ENCODE measurements at regions of chr1 and their contacts with region 1.

Region 1: DNA sequence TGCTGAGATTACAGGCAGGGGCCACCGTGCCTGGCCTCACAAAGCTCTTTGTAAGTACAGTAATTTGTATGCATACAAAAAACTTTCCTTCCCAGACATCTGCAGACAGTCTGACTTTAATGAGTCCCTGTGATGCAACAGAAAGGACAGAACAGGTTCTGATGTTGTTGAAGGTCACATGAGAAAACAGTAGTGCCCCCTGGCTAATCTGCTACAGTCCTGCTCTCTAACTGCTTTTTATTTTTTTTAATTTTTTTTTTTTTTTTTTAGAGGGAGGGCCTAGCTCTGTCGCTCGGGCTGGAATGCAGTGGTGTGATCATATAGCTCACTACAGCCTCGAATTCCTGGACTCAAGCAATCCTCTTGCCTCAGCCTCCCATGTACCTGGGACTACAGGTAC is 36.7 kb downstream of the ACBD3 start:
- DNase-seq: peak; percentile 30
- ATAC-seq: peak; percentile 56
- H3K4me3 ChIP-seq: no peak overlapping the region
- H3K4me3 Mint-ChIP-seq: no peak overlapping the region
- H3K27ac ChIP-seq: no peak overlapping the region
- H3K27ac Mint-ChIP-seq: peak overlapping the region; percentile 85
- H3K4me1 ChIP-seq: peaks cover 18 to 26% of the 10 kb centered on the region in 2 donors
- H3K4me1 Mint-ChIP-seq: peaks cover 44% of the 10 kb centered on the region
- H3K27me3 ChIP-seq: no peaks in the 10 kb centered on the region
- H3K27me3 Mint-ChIP-seq: no peaks in the 10 kb centered on the region
- CTCF ChIP-seq: no peak

Region 2: GRCh38 chr1:226135059-226135651 is 14.7 kb before region 1 on chr1:
- CTCF ChIA-PET with region 1: interaction called, 6 read pairs
- POLR2A ChIA-PET with region 1: interaction called, 13 read pairs
- intact Hi-C with region 1: no loop called
- DNase-seq: no peak
- ATAC-seq: no peak
- H3K4me3 ChIP-seq: no peak overlapping the region
- H3K4me3 Mint-ChIP-seq: no peak overlapping the region
- H3K27ac ChIP-seq: peak overlapping the region in 1 of 2 donors; percentile 57
- H3K27ac Mint-ChIP-seq: peak overlapping the region; percentile 99
- H3K4me1 ChIP-seq: peaks cover 46 to 54% of the 10 kb centered on the region in 2 donors
- H3K4me1 Mint-ChIP-seq: peaks cover 53% of the 10 kb centered on the region
- H3K27me3 ChIP-seq: no peaks in the 10 kb centered on the region
- H3K27me3 Mint-ChIP-seq: no peaks in the 10 kb centered on the region
- CTCF ChIP-seq: no peak

Measured in B cell (primary cell).